IMR-90 (cell line): ENCODE measurements at regions of chr18 and their contacts with region 1.

Region 1: GRCh38 chr18:29594493-29594892 is 1417.6 kb upstream of the CDH2 start:
- DNase-seq: no peak
- ATAC-seq: no peak
- H3K4me3 ChIP-seq: no peak overlapping the region
- H3K27ac ChIP-seq: no peak overlapping the region
- H3K4me1 ChIP-seq: no peaks in the 10 kb centered on the region
- H3K27me3 ChIP-seq: no peaks in the 10 kb centered on the region
- CTCF ChIP-seq: no peak
- POLR2A ChIP-seq: no peak
- RAD21 ChIP-seq: no peak

Region 2: DNA sequence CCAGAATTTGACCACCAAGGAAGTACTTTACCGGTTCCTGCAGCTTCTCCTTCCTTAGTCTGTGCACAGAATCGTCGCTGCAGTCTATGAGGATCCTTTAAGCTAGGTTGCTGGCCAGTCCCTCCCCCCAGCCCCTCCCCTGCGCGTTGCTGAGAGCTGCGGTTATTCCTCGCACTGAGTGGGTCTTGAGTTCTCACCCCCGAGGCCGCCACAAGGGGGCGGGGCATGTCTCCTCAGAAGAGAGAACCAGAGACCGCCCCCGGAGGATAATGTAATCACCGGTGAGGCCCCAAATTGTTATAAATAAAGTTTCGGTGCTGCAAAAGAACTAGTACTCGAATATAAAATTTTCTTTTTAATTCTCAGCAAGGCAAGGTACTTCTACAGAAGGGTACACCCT is 232.6 kb before region 1 on chr18:
- CTCF ChIA-PET with region 1: no interaction called
- POLR2A ChIA-PET with region 1: no interaction called
- dilution Hi-C with region 1: no loop called
- in situ Hi-C with region 1: no loop called
- intact Hi-C with region 1: no loop called
- DNase-seq: no peak
- ATAC-seq: no peak
- H3K4me3 ChIP-seq: no peak overlapping the region
- H3K27ac ChIP-seq: no peak overlapping the region
- H3K4me1 ChIP-seq: no peaks in the 10 kb centered on the region
- H3K27me3 ChIP-seq: no peaks in the 10 kb centered on the region
- CTCF ChIP-seq: no peak
- POLR2A ChIP-seq: no peak
- RAD21 ChIP-seq: no peak

Region 3: GRCh38 chr18:29608982-29609381 is 14.5 kb after region 1 on chr18:
- CTCF ChIA-PET with region 1: no interaction called
- POLR2A ChIA-PET with region 1: no interaction called
- dilution Hi-C with region 1: no loop called
- in situ Hi-C with region 1: no loop called
- intact Hi-C with region 1: no loop called
- DNase-seq: no peak
- ATAC-seq: no peak
- H3K4me3 ChIP-seq: no peak overlapping the region
- H3K27ac ChIP-seq: no peak overlapping the region
- H3K4me1 ChIP-seq: no peaks in the 10 kb centered on the region
- H3K27me3 ChIP-seq: no peaks in the 10 kb centered on the region
- CTCF ChIP-seq: no peak
- POLR2A ChIP-seq: no peak
- RAD21 ChIP-seq: no peak

Region 4: GRCh38 chr18:29661924-29662323 is 67.4 kb after region 1 on chr18:
- CTCF ChIA-PET with region 1: no interaction called
- POLR2A ChIA-PET with region 1: no interaction called
- dilution Hi-C with region 1: no loop called
- in situ Hi-C with region 1: no loop called
- intact Hi-C with region 1: loop called (anchors 2 kb)
- DNase-seq: no peak
- ATAC-seq: no peak
- H3K4me3 ChIP-seq: no peak overlapping the region
- H3K27ac ChIP-seq: no peak overlapping the region
- H3K4me1 ChIP-seq: no peaks in the 10 kb centered on the region
- H3K27me3 ChIP-seq: no peaks in the 10 kb centered on the region
- CTCF ChIP-seq: no peak
- POLR2A ChIP-seq: no peak
- RAD21 ChIP-seq: no peak